HEK293 (cell line): ENCODE measurements at regions of chr7 and their contacts with region 1.

Region 1: GRCh38 chr7:99408379-99409191 is at the starts of genes BUD31 and PDAP1:
- H3K4me3 ChIP-seq: peak within 1 kb of the TSS; percentile 92
- H3K27ac ChIP-seq: peak within 1 kb of the TSS; percentile 96
- H3K4me1 ChIP-seq: peaks cover 2% of the 10 kb centered on the region; the same call in 1 of the 2 replicates
- CTCF ChIP-seq: no peak

Region 2: DNA sequence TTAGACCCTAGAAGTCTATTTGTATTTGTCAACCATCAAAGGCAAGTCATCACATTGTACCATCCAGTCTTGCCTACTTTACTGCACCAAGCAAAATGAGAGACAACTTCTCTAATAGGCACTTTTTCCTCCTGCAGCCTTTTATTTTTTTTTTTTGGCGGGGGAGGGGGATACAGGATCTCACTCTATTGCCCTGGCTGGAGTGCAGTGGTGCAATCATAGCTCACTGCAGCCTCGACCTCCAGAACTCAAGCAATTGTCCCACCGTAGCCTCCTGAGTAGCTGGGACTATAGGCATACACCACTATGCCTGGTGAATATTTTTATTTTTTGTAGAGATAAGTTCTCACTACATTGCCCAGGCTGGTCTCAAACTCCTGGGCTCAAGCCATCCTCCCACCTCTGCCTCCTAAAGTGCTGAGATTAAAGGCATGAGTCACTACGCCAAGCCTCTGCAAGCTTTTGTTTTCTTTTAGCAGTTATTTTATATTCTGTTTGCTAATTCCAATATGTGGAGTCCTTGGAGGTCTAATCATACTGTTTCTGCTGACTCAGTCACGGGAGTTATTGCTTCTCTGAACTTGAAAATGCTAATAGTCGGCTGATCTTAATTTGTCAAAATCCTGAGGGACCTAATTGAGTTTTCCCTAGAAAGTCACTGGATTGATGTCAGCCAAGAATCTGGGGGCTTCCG is 214.9 kb before region 1 on chr7:
- CTCF ChIA-PET with region 1: no interaction called
- POLR2A ChIA-PET with region 1: no interaction called
- H3K4me3 ChIP-seq: no peak overlapping the region
- H3K27ac ChIP-seq: no peak overlapping the region
- H3K4me1 ChIP-seq: no peaks in the 10 kb centered on the region
- CTCF ChIP-seq: no peak

Region 3: GRCh38 chr7:99374103-99375064 is 34.2 kb before region 1 on chr7 and contains the start of gene ARPC1B:
- CTCF ChIA-PET with region 1: interaction called, 3 read pairs
- POLR2A ChIA-PET with region 1: interaction called, 21 read pairs
- H3K4me3 ChIP-seq: peak within 1 kb of the TSS; percentile 66
- H3K27ac ChIP-seq: peak within 1 kb of the TSS; percentile 53; the same call in 1 of the 2 replicates
- H3K4me1 ChIP-seq: no peaks in the 10 kb centered on the region
- CTCF ChIP-seq: no peak

Region 4: DNA sequence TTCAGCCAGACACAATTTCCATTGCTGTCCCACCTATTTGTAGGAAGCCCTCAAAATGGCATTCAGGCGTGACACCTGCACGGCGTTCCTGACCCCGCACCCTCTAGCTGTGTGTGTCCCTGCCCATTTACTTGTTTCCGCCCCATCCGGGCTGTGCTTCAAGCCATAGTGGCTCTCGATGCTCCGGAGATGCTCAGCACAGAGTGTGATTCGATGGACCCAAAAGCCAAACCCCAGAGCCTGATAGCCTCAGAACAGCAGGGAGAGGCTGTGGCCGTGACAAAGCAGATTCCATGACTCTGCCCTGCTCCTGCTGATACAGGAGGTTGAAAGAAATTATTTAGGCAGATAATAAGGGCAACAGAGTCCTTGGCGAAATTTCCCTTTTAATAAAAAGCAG is 13.6 kb after region 1 on chr7:
- CTCF ChIA-PET with region 1: no interaction called
- POLR2A ChIA-PET with region 1: interaction called, 36 read pairs
- H3K4me3 ChIP-seq: no peak overlapping the region
- H3K27ac ChIP-seq: no peak overlapping the region
- H3K4me1 ChIP-seq: no peaks in the 10 kb centered on the region
- CTCF ChIP-seq: no peak

Region 5: GRCh38 chr7:99438573-99439480 is 30.2 kb after region 1 on chr7 and contains the starts of genes CPSF4 and PTCD1:
- CTCF ChIA-PET with region 1: no interaction called
- POLR2A ChIA-PET with region 1: interaction called, 20 read pairs
- H3K4me3 ChIP-seq: peak within 1 kb of the TSS; percentile 91
- H3K27ac ChIP-seq: peak within 1 kb of the TSS; percentile 91
- H3K4me1 ChIP-seq: peaks cover 9% of the 10 kb centered on the region
- CTCF ChIP-seq: 0 out of 2 replicates have a peak, but pooled peaks have one; percentile 13